Activated naive CD4-positive, alpha-beta T cell treated with anti-CD3 and anti-CD28 coated beads for 36 hours (primary cell): ENCODE measurements at regions of chr3 and their contacts with region 1.

Region 1: GRCh38 chr3:43996379-43997301 is 245.0 kb upstream of the TOPAZ1 start:
- DNase-seq: peak; percentile 57
- H3K4me3 Mint-ChIP-seq: peak overlapping the region; percentile 70
- H3K27ac Mint-ChIP-seq: no peak overlapping the region
- H3K4me1 Mint-ChIP-seq: peaks cover 38% of the 10 kb centered on the region
- H3K27me3 Mint-ChIP-seq: peaks cover 74% of the 10 kb centered on the region

Region 2: DNA sequence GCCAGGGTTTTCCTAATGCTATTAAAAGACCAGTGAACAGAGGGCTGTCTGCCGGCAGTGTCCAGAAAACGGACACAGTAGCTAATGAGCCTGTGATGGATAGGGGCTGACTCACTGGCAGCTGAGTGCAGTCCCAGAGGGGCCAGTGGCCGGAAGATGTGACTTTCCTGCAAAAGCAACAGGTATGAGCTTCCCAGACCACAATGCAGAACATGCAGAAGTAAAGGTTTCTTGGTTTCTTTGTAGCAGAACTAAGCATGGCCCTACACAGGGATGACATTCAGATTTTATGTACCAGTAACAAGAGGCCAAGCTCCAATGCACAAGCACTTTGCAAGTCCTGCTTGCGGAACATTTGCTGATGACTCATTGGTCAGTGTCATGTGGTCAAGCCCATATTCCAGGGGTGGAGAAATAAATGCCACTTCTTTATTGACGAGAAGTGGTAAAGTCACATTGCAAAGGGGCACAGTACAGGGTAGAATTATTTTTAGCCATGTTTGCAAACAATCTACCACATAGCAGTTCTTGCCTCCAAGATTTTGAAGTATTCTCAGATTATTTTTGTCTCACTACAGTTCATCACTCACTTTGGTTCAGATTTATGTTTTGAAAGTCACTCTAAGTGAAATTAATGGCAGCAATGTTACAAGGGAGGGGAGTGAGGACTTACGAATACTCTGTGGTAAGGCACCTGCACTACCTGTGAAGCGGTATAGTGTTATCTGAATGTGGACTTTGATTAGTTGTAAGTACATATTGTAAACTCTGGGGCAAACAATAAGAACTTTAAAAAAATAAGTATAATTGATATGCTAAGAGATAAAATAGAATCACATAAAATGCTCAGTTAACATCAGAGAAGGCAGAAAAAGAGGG is 42.6 kb before region 1 on chr3:
- CTCF ChIA-PET with region 1: no interaction called
- intact Hi-C with region 1: no loop called
- DNase-seq: no peak
- H3K4me3 Mint-ChIP-seq: no peak overlapping the region
- H3K27ac Mint-ChIP-seq: no peak overlapping the region
- H3K4me1 Mint-ChIP-seq: peaks cover 7% of the 10 kb centered on the region
- H3K27me3 Mint-ChIP-seq: peaks cover 7% of the 10 kb centered on the region

Region 3: GRCh38 chr3:44021651-44022594 is 25.3 kb after region 1 on chr3:
- CTCF ChIA-PET with region 1: no interaction called
- intact Hi-C with region 1: loop called (anchors 2 kb)
- DNase-seq: no peak
- H3K4me3 Mint-ChIP-seq: no peak overlapping the region
- H3K27ac Mint-ChIP-seq: no peak overlapping the region
- H3K4me1 Mint-ChIP-seq: peaks cover 4% of the 10 kb centered on the region
- H3K27me3 Mint-ChIP-seq: peaks cover 33% of the 10 kb centered on the region

Region 4: DNA sequence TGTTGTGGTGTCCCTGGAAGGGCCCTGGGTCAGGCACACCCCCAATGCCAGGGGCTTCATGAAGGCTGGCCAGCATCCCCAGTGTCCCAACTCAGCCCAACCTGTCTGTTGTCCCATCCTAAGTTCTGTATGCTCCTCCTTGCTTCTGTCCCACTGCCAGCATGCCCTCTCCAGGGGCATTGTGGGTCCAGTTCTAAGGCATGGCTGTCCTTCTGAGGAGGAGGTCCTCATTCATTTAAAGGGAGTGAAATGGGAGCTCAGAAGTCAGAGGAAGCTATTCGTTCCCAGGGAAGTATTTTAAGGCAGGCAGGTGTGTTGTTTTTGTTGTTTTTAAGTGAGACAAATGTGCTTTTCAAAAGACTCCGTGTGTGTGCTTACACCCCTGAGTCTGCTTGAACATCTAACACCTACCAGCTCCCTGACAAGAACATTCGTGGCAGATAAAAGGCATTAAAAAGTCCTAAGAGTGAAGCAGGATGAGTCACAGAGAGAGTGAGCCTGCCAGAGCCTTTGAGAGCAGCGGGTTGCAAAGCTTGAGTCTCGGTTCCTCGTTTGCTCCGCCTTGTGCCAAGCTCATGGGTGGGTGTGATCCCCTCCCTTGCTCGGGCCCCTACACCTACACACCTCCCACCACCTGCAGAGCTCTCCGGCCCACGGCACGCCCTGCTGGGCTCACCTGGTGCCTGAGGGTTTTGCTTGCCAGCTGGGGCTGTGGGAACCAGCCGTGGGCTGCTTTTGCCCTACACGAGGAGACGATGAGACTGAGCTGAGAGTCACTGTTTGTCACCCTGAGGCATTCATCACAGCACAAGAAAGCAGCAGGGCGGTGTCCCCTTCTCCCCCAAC is 61.6 kb after region 1 on chr3:
- CTCF ChIA-PET with region 1: interaction called, 3 read pairs
- intact Hi-C with region 1: loop called (anchors 2 kb)
- DNase-seq: peak; percentile 64
- H3K4me3 Mint-ChIP-seq: peak overlapping the region; percentile 62
- H3K27ac Mint-ChIP-seq: peak overlapping the region; percentile 67
- H3K4me1 Mint-ChIP-seq: peaks cover 32% of the 10 kb centered on the region
- H3K27me3 Mint-ChIP-seq: peaks cover 6% of the 10 kb centered on the region

Region 5: DNA sequence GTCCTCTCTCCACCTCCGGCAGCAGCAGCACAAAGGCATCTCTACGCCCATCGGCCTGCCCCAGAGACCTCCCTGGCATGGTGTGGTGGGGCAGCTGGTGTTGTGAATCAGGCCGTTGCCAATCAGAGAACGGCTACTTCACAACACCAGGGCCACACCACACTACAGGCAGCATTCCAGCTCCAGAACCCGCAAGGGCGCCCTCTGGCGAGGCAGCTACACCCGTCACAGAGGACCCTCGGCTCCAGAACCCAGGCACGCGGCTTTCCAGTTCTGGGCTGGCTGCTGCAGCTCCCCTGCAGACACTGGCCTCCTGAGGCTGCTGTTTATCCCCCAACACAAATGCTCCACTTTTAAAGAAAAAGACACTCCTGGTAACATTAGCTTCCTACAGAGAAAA is 117.5 kb after region 1 on chr3:
- CTCF ChIA-PET with region 1: interaction called, 3 read pairs
- intact Hi-C with region 1: loop called (anchors 2 kb)
- DNase-seq: peak; percentile 67
- H3K4me3 Mint-ChIP-seq: no peak overlapping the region
- H3K27ac Mint-ChIP-seq: no peak overlapping the region
- H3K4me1 Mint-ChIP-seq: no peaks in the 10 kb centered on the region
- H3K27me3 Mint-ChIP-seq: peaks cover 6% of the 10 kb centered on the region